CD4-positive, alpha-beta memory T cell (primary cell): ENCODE measurements at regions of chr3 and their contacts with region 1.

Region 1: DNA sequence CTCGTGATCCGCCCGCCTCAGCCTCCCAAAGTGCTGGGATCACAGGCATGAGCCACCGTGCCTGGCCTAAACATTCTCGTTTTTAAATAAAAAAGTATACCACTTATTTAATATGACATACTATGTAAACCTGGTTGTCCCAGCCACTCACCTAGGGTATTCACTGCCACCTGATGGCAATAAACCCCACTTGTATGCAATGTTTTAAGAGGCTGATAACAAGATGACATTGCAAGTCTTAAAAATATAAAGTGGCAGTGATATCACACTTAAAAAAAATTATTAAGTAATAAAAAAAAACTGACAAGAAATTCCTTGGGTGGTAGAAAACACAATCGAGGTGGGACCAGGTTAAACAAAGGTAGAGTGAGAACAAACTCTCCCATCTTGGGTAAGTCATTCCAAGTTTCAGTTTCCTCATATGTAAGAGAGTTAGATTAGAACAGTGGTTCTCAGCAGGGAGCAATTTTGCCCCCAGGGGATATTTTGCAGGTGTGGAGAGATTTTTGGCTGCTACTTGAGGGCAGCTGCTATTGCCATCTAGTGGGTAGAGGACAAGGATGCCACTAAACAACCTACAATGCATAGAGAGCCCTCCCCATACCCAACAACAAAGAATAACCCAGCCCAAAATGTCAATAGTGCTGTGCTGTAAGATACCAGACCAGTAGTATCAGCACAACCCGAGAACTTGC is 14.5 kb downstream of the ARF4 start:
- DNase-seq: peak in 1 of 5 donors; percentile 14
- H3K4me3 ChIP-seq: no peak overlapping the region
- H3K4me3 Mint-ChIP-seq: no peak overlapping the region
- H3K27ac ChIP-seq: no peak overlapping the region
- H3K27ac Mint-ChIP-seq: peak overlapping the region in 4 of 7 donors; percentile 5 to 68 (median 45)
- H3K4me1 ChIP-seq: peaks cover 24% of the 10 kb centered on the region
- H3K4me1 Mint-ChIP-seq: peaks cover 16 to 37% (median 28%) of the 10 kb centered on the region in 4 donors
- H3K27me3 ChIP-seq: no peaks in the 10 kb centered on the region
- H3K27me3 Mint-ChIP-seq: no peaks in the 10 kb centered on the region

Region 2: GRCh38 chr3:57597122-57597923 is 14.7 kb after region 1 on chr3 and contains the start of gene ARF4:
- CTCF ChIA-PET with region 1: interaction called, 3 read pairs
- POLR2A ChIA-PET with region 1: interaction called, 30 read pairs
- intact Hi-C with region 1: loop called (anchors 2 kb)
- DNase-seq: peak; percentile 100
- H3K4me3 ChIP-seq: peak within 1 kb of the TSS; percentile 72 to 95
- H3K4me3 Mint-ChIP-seq: peak within 1 kb of the TSS; percentile 85 to 99 (median 99)
- H3K27ac ChIP-seq: peak within 1 kb of the TSS; percentile 100
- H3K27ac Mint-ChIP-seq: peak within 1 kb of the TSS; percentile 99 to 100 (median 100)
- H3K4me1 ChIP-seq: peaks cover 62% of the 10 kb centered on the region
- H3K4me1 Mint-ChIP-seq: peaks cover 34 to 72% (median 48%) of the 10 kb centered on the region in 4 donors
- H3K27me3 ChIP-seq: no peaks in the 10 kb centered on the region
- H3K27me3 Mint-ChIP-seq: no peaks in the 10 kb centered on the region
- total RNA-seq, gene ARF4: 55.8 to 58.5 TPM